GM10248 (cell line): ENCODE measurements at regions of chr1 and their contacts with region 1.

Region 1: GRCh38 chr1:156282479-156283222 is at the start of gene SMG5:
- DNase-seq: peak; percentile 95
- CTCF ChIP-seq: no peak

Region 2: GRCh38 chr1:155759966-155760630 is 522.6 kb before region 1 on chr1:
- CTCF ChIA-PET with region 1: no interaction called
- POLR2A ChIA-PET with region 1: no interaction called
- DNase-seq: no peak
- CTCF ChIP-seq: no peak

Region 3: GRCh38 chr1:156140879-156141252 is 141.8 kb before region 1 on chr1:
- CTCF ChIA-PET with region 1: interaction called, 19 read pairs
- POLR2A ChIA-PET with region 1: no interaction called
- DNase-seq: no peak
- CTCF ChIP-seq: no peak

Region 4: DNA sequence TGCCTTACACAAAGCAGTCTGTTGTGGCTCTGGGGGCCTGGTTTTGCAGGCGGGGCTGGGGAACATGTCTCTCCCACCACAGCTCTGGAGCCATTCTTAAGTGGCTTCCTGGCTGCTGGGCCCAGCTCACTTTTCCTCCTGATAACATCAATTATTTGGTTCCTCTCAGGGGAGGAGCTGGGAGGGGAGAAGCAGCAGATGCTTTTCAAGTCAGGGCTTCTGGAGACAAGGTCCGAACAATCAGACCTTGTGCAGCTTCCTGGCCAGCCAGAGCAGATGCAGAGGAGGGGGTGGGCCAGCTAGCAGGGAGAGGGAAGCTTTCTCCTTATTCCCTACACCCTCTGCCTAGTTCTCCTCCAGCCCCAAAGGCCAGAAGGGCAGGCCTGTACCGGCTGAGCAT is 31.1 kb before region 1 on chr1:
- CTCF ChIA-PET with region 1: interaction called, 5 read pairs
- POLR2A ChIA-PET with region 1: interaction called, 10 read pairs
- DNase-seq: no peak
- CTCF ChIP-seq: no peak

Region 5: GRCh38 chr1:156270314-156270713 is 12.3 kb before region 1 on chr1:
- CTCF ChIA-PET with region 1: interaction called, 12 read pairs
- POLR2A ChIA-PET with region 1: interaction called, 4 read pairs
- DNase-seq: no peak
- CTCF ChIP-seq: no peak

Region 6: DNA sequence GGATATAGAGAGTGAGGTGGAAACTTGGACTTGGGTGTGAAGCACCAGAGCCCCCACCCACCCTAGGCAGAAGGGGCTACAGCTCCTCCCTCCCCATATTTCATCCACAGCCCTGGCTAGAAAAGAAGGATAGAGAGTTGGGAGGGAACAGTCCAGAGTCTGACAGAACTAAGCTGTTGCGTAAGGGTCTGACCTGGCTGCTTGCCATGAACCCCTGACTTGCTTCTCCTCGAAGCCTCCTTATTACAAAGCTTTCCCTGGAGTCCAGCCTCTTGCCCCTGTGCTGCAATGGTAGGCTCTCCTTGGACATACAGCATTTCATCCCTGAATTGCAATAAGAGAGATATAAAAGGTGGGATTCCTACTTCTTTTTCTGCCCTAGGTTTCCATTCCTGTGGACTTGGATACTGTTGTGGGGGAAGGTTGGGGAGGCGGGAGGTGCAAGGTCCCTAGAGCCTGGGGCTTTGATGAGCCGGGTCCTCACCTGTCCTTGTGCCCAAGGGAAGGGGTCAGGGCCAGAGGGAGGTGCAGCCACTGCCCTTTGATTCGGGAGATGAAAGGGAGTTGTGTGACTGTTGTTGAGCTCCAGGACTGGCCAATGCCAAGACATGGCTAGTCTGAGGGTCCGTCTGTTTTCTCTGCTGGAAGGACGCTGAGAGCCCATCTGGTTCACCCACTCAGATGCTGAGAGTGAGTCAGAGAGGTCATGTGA is 89.1 kb after region 1 on chr1:
- CTCF ChIA-PET with region 1: no interaction called
- POLR2A ChIA-PET with region 1: no interaction called
- DNase-seq: no peak
- CTCF ChIP-seq: no peak